ENCODE measurements at regions of chr10 and their contacts with region 1.

Region 1: GRCh38 chr10:356452-356851 is 221.2 kb downstream of the ZMYND11 start:
- DNase-seq: peak; percentile 54
- ATAC-seq: peak; percentile 53
- H3K4me3 ChIP-seq: no peak overlapping the region
- H3K4me3 Mint-ChIP-seq: no peak overlapping the region
- H3K27ac ChIP-seq: no peak overlapping the region
- H3K27ac Mint-ChIP-seq: no peak overlapping the region
- H3K4me1 ChIP-seq: no peaks in the 10 kb centered on the region
- H3K4me1 Mint-ChIP-seq: peaks cover 3% of the 10 kb centered on the region
- H3K27me3 ChIP-seq: no peaks in the 10 kb centered on the region
- H3K27me3 Mint-ChIP-seq: peaks cover 2% of the 10 kb centered on the region
- CTCF ChIP-seq: peak; percentile 22

Region 2: GRCh38 chr10:135132-135600 is 221.3 kb before region 1 on chr10 and contains the start of gene ZMYND11:
- CTCF ChIA-PET with region 1: no interaction called
- POLR2A ChIA-PET with region 1: interaction called, 11 read pairs
- intact Hi-C with region 1: no loop called
- DNase-seq: peak; percentile 81
- ATAC-seq: peak; percentile 52
- H3K4me3 ChIP-seq: peak within 1 kb of the TSS; percentile 64 to 73 (median 73)
- H3K4me3 Mint-ChIP-seq: peak within 1 kb of the TSS; percentile 92
- H3K27ac ChIP-seq: peak within 1 kb of the TSS; percentile 44 to 83
- H3K27ac Mint-ChIP-seq: peak within 1 kb of the TSS; percentile 97
- H3K4me1 ChIP-seq: peaks cover 16 to 19% of the 10 kb centered on the region in 2 donors
- H3K4me1 Mint-ChIP-seq: peaks cover 35% of the 10 kb centered on the region
- H3K27me3 ChIP-seq: peaks cover 0 to 22% (median 10%) of the 10 kb centered on the region in 4 experiments
- H3K27me3 Mint-ChIP-seq: peaks cover 15% of the 10 kb centered on the region
- CTCF ChIP-seq: no peak
- total RNA-seq, gene ZMYND11: 47.9 and 50.1 TPM in 2 replicates

Region 3: GRCh38 chr10:178208-178607 is 178.2 kb before region 1 on chr10:
- CTCF ChIA-PET with region 1: interaction called, 3 read pairs
- POLR2A ChIA-PET with region 1: no interaction called
- intact Hi-C with region 1: loop called (anchors 1 kb)
- DNase-seq: peak; percentile 26
- ATAC-seq: no peak
- H3K4me3 ChIP-seq: no peak overlapping the region
- H3K4me3 Mint-ChIP-seq: no peak overlapping the region
- H3K27ac ChIP-seq: no peak overlapping the region
- H3K27ac Mint-ChIP-seq: no peak overlapping the region
- H3K4me1 ChIP-seq: no peaks in the 10 kb centered on the region
- H3K4me1 Mint-ChIP-seq: peaks cover 7% of the 10 kb centered on the region
- H3K27me3 ChIP-seq: no peaks in the 10 kb centered on the region
- H3K27me3 Mint-ChIP-seq: no peaks in the 10 kb centered on the region
- CTCF ChIP-seq: peak; percentile 62

Region 4: DNA sequence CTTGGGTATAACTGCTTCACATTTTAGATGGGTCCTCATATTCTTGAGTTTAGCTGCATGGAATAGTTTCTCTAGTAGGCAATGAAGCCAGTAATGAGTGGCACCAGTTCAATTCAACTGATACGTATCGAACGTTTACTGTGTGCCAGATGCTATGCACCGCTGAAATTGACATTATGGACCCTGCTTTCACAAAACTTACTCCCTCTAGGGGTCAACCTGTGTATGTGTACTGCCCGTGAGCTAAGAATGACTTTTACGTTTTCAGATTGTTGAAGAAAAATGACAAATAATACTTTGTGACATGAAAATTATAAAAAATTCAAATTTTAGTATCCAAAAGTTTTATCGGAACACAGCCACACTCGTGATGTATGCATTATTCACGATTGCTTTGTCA is 125.7 kb before region 1 on chr10:
- CTCF ChIA-PET with region 1: no interaction called
- POLR2A ChIA-PET with region 1: interaction called, 10 read pairs
- intact Hi-C with region 1: no loop called
- DNase-seq: no peak
- ATAC-seq: no peak
- H3K4me3 ChIP-seq: no peak overlapping the region
- H3K4me3 Mint-ChIP-seq: no peak overlapping the region
- H3K27ac ChIP-seq: no peak overlapping the region
- H3K27ac Mint-ChIP-seq: no peak overlapping the region
- H3K4me1 ChIP-seq: no peaks in the 10 kb centered on the region
- H3K4me1 Mint-ChIP-seq: peaks cover 4% of the 10 kb centered on the region
- H3K27me3 ChIP-seq: no peaks in the 10 kb centered on the region
- H3K27me3 Mint-ChIP-seq: no peaks in the 10 kb centered on the region
- CTCF ChIP-seq: peak; percentile 25

Measured in B cell (primary cell).